ENCODE measurements at regions of chr5 and their contacts with region 1.

Region 1: DNA sequence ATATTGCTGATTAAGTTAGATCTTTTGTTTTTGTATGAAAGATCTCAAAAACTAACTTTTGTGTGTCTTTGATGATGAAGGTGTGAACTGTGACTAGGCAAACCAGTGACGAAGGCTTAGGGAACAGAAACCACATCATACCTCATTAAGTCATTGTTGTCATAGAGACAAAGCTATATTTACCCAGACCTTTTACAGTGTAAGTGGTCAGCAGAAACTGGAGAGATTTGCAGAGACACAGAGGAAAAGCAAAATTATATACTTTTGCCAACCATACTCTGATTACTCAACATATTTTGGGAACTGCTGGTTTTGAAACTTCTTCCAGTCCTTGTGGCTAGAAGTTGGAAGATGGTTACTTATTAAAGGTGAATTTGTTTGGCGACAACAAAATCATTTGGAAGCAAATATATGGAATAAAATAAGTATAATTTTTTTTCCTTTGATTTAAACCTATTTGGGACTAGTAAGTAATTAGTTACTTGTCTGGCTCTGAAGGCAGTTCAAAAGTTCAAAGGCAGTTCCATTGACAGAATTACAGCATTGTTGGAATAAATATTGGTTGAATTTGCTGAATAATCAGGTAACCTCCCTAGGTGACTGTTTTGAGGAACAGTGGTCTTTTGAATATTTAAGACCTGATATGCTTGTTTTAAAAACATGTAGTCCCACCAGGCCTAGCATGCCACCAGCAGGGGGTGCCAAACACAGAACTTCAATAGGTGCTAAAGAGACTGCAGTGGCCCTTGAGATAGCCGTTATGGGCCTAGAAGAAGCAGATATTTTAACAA is 103.8 kb downstream of the RPS23 start:
- DNase-seq: peak; percentile 51 to 88
- H3K4me3 ChIP-seq: no peak overlapping the region
- H3K27ac ChIP-seq: no peak overlapping the region
- H3K4me1 ChIP-seq: no peaks in the 10 kb centered on the region
- H3K27me3 ChIP-seq: no peaks in the 10 kb centered on the region
- CTCF ChIP-seq: peak; percentile 58 to 73 (median 60)
- EP300 ChIP-seq: no peak
- POLR2A ChIP-seq: no peak
- RAD21 ChIP-seq: peak; percentile 50 to 71

Region 2: GRCh38 chr5:82185851-82186250 is 11.5 kb after region 1 on chr5:
- CTCF ChIA-PET with region 1: interaction called, 62 read pairs
- POLR2A ChIA-PET with region 1: no interaction called
- DNase-seq: no peak
- H3K4me3 ChIP-seq: no peak overlapping the region
- H3K27ac ChIP-seq: no peak overlapping the region
- H3K4me1 ChIP-seq: no peaks in the 10 kb centered on the region
- H3K27me3 ChIP-seq: no peaks in the 10 kb centered on the region
- CTCF ChIP-seq: no peak
- EP300 ChIP-seq: no peak
- POLR2A ChIP-seq: no peak
- RAD21 ChIP-seq: no peak

Region 3: DNA sequence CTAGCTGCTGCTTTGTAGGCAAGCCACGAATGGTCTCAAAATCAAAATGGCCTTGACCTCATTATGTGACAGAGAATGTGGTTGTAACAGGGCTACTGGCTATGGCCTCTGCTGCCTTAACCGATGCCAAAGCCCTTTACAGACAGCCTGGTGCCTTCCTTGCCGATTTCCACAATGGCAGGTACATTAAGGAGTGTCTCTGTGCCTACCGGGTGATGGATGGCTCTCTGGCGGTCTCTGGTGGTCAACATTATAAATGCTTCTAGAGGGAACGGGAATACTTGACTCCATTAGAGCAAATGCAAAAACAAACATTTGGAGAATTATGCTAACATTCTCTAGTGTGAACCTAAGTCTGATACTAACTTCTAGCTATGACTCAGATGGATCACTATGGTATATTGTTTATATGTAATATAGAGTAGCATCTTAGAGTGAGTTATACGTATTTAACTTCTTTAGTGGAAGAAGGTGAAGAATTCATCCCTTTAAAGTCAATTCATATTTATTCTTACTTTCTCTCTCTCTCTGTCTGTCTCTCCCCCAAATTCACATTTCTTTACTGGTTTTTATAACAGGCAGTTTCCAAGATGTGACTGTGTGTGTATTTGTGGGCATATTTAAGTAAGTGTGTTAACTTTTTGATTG is 51.3 kb after region 1 on chr5:
- CTCF ChIA-PET with region 1: interaction called, 23 read pairs
- POLR2A ChIA-PET with region 1: no interaction called
- DNase-seq: peak; percentile 33 to 85
- H3K4me3 ChIP-seq: no peak overlapping the region
- H3K27ac ChIP-seq: no peak overlapping the region
- H3K4me1 ChIP-seq: peaks cover 0 to 9% (median 0%) of the 10 kb centered on the region in 4 experiments; a peak in 3 of 7 replicates
- H3K27me3 ChIP-seq: no peaks in the 10 kb centered on the region
- CTCF ChIP-seq: peak; percentile 52 to 89 (median 87)
- EP300 ChIP-seq: no peak
- POLR2A ChIP-seq: no peak
- RAD21 ChIP-seq: peak; percentile 98 to 99